Cardiac septum (tissue), 1 donor: ENCODE measurements at regions of chr3 and their contacts with region 1.

Region 1: DNA sequence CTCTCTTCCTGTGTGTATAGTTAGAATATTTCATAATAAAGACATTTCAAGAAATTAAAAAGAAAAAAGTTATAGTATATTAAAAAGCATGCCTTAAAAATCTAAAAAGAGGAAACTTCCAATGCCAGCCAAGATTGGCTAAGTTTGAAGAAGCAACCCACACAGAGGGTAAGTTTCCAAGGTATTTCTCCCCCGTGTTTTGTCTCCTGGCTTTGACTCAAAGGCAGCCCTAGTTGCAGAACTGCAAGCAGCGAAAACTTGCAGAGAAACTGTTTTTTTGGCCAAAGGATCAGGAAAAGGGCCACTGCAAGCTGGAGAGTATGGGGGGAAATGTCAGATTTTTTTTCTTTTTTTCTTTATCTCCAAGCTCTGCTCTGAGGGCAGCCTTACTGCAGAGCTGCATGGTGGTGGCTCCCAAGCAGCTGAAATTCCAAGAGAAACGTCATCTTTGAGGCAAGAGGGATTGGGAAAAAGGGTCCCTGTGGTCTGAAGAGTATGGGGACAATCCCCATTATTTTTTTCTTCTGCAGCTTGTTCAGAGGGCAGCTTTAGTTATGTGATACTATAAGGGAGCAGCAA is 23.0 kb downstream of the HACL1 start:
- DNase-seq: no peak

Region 2: DNA sequence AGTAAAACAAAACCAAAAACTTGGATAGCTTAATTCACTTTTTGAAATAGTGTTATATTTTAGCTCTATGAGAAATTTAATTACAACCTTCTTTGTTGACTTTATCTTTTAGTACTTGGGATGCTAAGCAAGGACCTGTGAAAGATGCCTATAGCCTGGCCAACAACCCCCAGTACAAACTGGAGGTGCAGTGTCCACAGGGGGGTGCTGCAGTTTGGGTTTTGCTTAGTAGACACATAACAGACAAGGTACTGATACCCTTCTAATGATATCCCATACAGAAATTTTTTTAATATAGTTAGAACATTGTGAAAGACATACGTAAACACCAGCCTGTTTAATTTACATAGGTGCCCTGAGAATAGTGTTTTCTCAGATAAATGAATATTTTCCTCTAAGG is 337.0 kb before region 1 on chr3:
- intact Hi-C with region 1: loop called (anchors 10 kb)
- DNase-seq: no peak